ENCODE measurements at regions of chr6 and their contacts with region 1.

Region 1: DNA sequence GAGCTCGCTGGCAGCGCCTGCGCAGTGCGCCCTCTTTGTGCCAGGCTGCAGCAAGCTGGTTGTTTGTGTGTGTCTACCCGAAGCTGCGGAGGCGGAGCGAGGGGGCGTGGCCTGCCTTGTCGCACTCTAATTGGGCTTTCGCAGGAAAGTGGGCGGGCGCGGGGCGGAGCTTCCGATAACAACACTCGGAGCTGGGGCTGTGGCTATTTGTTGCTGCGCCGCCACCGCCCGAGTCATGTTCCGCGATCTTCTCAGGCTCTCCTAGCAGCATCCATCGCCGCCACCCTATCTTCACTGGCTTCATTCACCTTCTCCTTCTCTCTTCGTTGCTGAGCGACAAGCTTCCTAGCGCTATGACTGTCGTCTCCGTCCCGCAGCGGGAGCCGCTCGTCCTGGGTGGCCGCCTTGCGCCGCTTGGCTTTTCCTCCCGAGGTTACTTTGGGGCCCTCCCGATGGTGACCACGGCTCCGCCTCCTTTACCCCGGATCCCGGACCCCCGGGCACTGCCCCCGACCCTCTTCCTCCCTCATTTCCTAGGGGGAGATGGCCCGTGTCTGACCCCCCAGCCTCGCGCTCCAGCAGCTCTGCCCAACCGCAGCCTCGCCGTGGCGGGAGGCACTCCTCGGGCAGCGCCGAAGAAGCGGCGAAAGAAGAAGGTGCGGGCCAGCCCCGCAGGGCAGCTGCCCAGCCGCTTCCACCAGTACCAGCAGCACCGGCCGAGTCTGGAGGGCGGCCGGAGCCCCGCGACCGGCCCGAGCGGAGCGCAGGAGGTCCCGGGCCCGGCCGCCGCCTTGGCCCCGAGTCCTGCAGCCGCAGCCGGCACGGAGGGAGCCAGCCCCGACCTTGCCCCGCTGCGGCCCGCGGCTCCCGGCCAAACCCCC is at the start of gene PNRC1:
- DNase-seq: peak; percentile 100
- H3K4me3 ChIP-seq: peak within 1 kb of the TSS; percentile 100
- H3K27ac ChIP-seq: peak within 1 kb of the TSS; percentile 100
- H3K4me1 ChIP-seq: no peaks in the 10 kb centered on the region
- H3K27me3 ChIP-seq: no peaks in the 10 kb centered on the region
- CTCF ChIP-seq: peak in 1 of 4 experiments; percentile 11
- POLR2A ChIP-seq: peak; percentile 100
- total RNA-seq, gene PNRC1: 216 to 273 TPM

Region 2: DNA sequence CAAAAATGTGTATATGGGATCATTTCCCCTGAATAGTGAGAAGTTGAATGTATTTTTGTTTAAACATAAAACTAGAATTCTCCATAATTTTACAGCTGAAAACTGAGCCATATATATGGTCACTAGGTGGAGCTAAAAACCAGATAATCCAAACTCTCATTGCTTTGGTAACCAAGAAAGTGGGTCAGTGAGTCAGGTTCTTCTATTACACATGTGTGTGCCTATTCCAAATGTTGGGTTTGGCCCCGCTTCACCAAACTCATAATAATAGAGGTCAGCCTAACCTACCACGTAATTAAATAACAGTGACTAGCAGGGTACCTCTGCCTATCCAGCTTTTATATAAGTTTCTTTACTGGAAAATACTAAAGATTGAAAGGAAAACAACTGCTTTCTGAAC is 98.1 kb before region 1 on chr6:
- intact Hi-C with region 1: loop called (anchors 5 kb)
- DNase-seq: peak; percentile 62
- H3K4me3 ChIP-seq: no peak overlapping the region
- H3K27ac ChIP-seq: no peak overlapping the region
- H3K4me1 ChIP-seq: no peaks in the 10 kb centered on the region
- H3K27me3 ChIP-seq: no peaks in the 10 kb centered on the region
- CTCF ChIP-seq: peak; percentile 36 to 86 (median 74)
- POLR2A ChIP-seq: no peak

Region 3: GRCh38 chr6:89035252-89036106 is 45.3 kb before region 1 on chr6:
- intact Hi-C with region 1: loop called (anchors 1 kb)
- DNase-seq: peak; percentile 93
- H3K4me3 ChIP-seq: peak overlapping the region in 1 of 2 donors; percentile 2
- H3K27ac ChIP-seq: peak overlapping the region; percentile 75 to 81
- H3K4me1 ChIP-seq: peaks cover 3% of the 10 kb centered on the region
- H3K27me3 ChIP-seq: no peaks in the 10 kb centered on the region
- CTCF ChIP-seq: no peak
- POLR2A ChIP-seq: peak; percentile 23

Region 4: GRCh38 chr6:89145787-89146646 is 65.2 kb after region 1 on chr6 and contains the start of gene PM20D2:
- intact Hi-C with region 1: loop called (anchors 5 kb)
- DNase-seq: peak; percentile 60
- H3K4me3 ChIP-seq: peak within 1 kb of the TSS; percentile 78 to 87
- H3K27ac ChIP-seq: peak within 1 kb of the TSS; percentile 94 to 97
- H3K4me1 ChIP-seq: peaks cover 5% of the 10 kb centered on the region
- H3K27me3 ChIP-seq: no peaks in the 10 kb centered on the region
- CTCF ChIP-seq: no peak
- POLR2A ChIP-seq: peak; percentile 68
- total RNA-seq, gene PM20D2: 11.9 to 48.4 TPM